Caco-2 (cell line): ENCODE measurements at regions of chr2 and their contacts with region 1.

Region 1: DNA sequence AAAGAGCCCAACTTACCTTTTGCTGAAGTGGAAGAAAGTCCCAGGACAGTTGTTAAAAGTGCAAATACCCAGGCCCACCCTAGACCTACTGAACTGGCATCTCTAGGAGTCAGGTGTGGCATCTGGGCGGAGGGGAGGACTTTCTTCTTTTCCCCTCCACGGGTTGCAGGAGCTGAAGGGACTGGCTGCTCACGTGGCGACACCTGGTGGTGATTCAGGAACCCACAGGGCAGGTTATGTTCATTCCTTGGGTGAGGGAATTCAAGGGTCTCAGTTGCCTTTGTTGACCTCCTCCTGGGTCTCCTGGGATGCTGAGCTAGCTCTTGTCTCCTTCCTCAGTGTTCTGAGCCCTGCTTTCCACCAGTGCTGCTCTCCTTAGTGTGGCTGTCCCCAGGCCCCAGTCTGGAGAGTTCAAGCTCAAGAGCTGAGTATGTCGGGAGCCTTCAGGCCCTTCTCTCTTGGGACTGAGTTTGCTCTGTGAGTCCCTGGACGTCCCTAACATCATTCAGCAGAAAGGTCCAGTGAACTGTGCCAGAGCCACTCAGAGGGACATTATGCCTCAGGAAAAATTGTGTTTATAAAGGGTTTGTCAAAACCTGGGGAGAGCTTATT is 56.9 kb downstream of the DYSF start:
- DNase-seq: peak; percentile 77 to 82
- H3K4me3 ChIP-seq: no peak overlapping the region
- H3K4me3 Mint-ChIP-seq: no peak overlapping the region
- H3K27ac Mint-ChIP-seq: no peak overlapping the region
- H3K4me1 ChIP-seq: no peaks in the 10 kb centered on the region
- H3K4me1 Mint-ChIP-seq: no peaks in the 10 kb centered on the region
- H3K27me3 ChIP-seq: no peaks in the 10 kb centered on the region
- H3K27me3 Mint-ChIP-seq: peaks cover 11% of the 10 kb centered on the region
- CTCF ChIP-seq: peak; percentile 91 to 92

Region 2: GRCh38 chr2:71157124-71157793 is 353.0 kb before region 1 on chr2:
- CTCF ChIA-PET with region 1: no interaction called
- POLR2A ChIA-PET with region 1: no interaction called
- intact Hi-C with region 1: loop called (anchors 1 kb)
- DNase-seq: peak; percentile 62 to 77
- H3K4me3 ChIP-seq: no peak overlapping the region
- H3K4me3 Mint-ChIP-seq: no peak overlapping the region
- H3K27ac Mint-ChIP-seq: no peak overlapping the region
- H3K4me1 ChIP-seq: peaks cover 10% of the 10 kb centered on the region; the same call in 1 of the 2 replicates
- H3K4me1 Mint-ChIP-seq: peaks cover 15% of the 10 kb centered on the region
- H3K27me3 ChIP-seq: no peaks in the 10 kb centered on the region
- H3K27me3 Mint-ChIP-seq: peaks cover 3% of the 10 kb centered on the region
- CTCF ChIP-seq: peak; percentile 77 to 80

Region 3: GRCh38 chr2:71299507-71299906 is 210.8 kb before region 1 on chr2:
- CTCF ChIA-PET with region 1: interaction called, 108 read pairs
- POLR2A ChIA-PET with region 1: no interaction called
- intact Hi-C with region 1: loop called (anchors 1 kb)
- DNase-seq: peak in 1 of 2 experiments; percentile 53
- H3K4me3 ChIP-seq: no peak overlapping the region
- H3K4me3 Mint-ChIP-seq: no peak overlapping the region
- H3K27ac Mint-ChIP-seq: no peak overlapping the region
- H3K4me1 ChIP-seq: no peaks in the 10 kb centered on the region
- H3K4me1 Mint-ChIP-seq: no peaks in the 10 kb centered on the region
- H3K27me3 ChIP-seq: no peaks in the 10 kb centered on the region
- H3K27me3 Mint-ChIP-seq: no peaks in the 10 kb centered on the region
- CTCF ChIP-seq: peak; percentile 68 to 75

Region 4: DNA sequence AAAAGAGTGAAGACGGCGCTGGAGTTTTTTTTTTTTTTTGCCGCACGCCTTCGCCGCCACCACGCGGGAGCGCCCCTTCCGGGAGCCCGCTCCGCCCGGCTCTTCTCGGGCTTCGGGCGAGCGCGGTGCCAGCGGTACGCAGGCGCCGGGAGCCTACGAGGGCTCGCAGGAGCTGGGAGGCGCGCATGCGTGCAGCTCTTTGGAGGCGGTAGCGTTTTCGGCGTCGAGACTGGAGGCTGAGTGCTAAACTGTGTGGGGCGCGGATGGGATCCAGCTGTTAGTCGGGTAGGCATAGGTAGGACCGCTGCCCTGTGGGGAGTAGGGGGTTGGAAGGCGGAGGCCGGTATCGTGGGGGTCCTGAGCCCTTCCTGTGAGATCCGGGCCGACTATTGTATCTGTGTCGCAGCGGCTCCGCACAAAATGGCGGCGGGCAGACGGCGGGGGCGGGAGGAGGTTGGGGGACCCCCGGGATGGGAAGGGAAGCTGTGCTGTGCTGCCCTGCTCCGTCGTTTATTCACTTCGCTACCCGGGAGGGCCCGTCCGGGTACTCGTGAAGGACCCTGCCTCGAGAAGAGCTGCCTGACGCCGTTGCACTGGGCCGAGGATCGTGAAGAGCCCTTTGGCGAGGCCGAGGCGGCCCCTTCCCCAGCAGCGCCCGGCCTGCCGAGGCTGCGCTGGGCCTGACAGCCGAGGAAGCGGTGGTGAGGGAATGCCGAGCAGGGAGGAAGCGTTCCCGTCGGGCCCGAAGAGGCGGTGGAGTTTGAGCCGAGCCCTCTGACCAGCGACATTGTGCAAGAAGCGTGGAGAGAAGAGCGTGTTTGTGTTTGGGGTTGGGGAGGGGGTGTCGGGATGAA is 178.5 kb before region 1 on chr2 and contains the start of gene ZNF638:
- CTCF ChIA-PET with region 1: interaction called, 19 read pairs
- POLR2A ChIA-PET with region 1: no interaction called
- intact Hi-C with region 1: no loop called
- DNase-seq: peak; percentile 89 to 95
- H3K4me3 ChIP-seq: peak within 1 kb of the TSS; percentile 92
- H3K4me3 Mint-ChIP-seq: peak within 1 kb of the TSS; percentile 98
- H3K27ac Mint-ChIP-seq: peak within 1 kb of the TSS; percentile 99
- H3K4me1 ChIP-seq: peaks cover 11% of the 10 kb centered on the region; the same call in 1 of the 2 replicates
- H3K4me1 Mint-ChIP-seq: peaks cover 23% of the 10 kb centered on the region
- H3K27me3 ChIP-seq: no peaks in the 10 kb centered on the region
- H3K27me3 Mint-ChIP-seq: no peaks in the 10 kb centered on the region
- CTCF ChIP-seq: peak; percentile 68 to 77
- total RNA-seq, gene ZNF638: 133 and 134 TPM in 2 replicates

Region 5: GRCh38 chr2:71452565-71452964 is 57.7 kb before region 1 on chr2:
- CTCF ChIA-PET with region 1: interaction called, 6 read pairs
- POLR2A ChIA-PET with region 1: no interaction called
- intact Hi-C with region 1: loop called (anchors 2 kb)
- DNase-seq: peak; percentile 70 to 81
- H3K4me3 ChIP-seq: no peak overlapping the region
- H3K4me3 Mint-ChIP-seq: peak overlapping the region; percentile 26
- H3K27ac Mint-ChIP-seq: no peak overlapping the region
- H3K4me1 ChIP-seq: peaks cover 18% of the 10 kb centered on the region
- H3K4me1 Mint-ChIP-seq: peaks cover 23% of the 10 kb centered on the region
- H3K27me3 ChIP-seq: no peaks in the 10 kb centered on the region
- H3K27me3 Mint-ChIP-seq: no peaks in the 10 kb centered on the region
- CTCF ChIP-seq: peak; percentile 37 to 51

Region 6: GRCh38 chr2:71460595-71461303 is 49.6 kb before region 1 on chr2:
- CTCF ChIA-PET with region 1: interaction called, 19 read pairs
- POLR2A ChIA-PET with region 1: no interaction called
- intact Hi-C with region 1: loop called (anchors 1 kb)
- DNase-seq: peak in 1 of 2 experiments; percentile 24
- H3K4me3 ChIP-seq: no peak overlapping the region
- H3K4me3 Mint-ChIP-seq: no peak overlapping the region
- H3K27ac Mint-ChIP-seq: no peak overlapping the region
- H3K4me1 ChIP-seq: peaks cover 11% of the 10 kb centered on the region
- H3K4me1 Mint-ChIP-seq: peaks cover 8% of the 10 kb centered on the region
- H3K27me3 ChIP-seq: no peaks in the 10 kb centered on the region
- H3K27me3 Mint-ChIP-seq: no peaks in the 10 kb centered on the region
- CTCF ChIP-seq: peak in 1 of 2 experiments; percentile 63